ENCODE measurements at regions of chr17 and their contacts with region 1.

Region 1: GRCh38 chr17:78250891-78251794 is 19.7 kb downstream of the TMEM235 start:
- DNase-seq: peak; percentile 70 to 88 (median 82)
- ATAC-seq: peak; percentile 73
- H3K4me3 ChIP-seq: peak overlapping the region; percentile 73
- H3K4me3 Mint-ChIP-seq: peak overlapping the region; percentile 82 to 96 (median 92)
- H3K27ac ChIP-seq: peak overlapping the region; percentile 87
- H3K27ac Mint-ChIP-seq: peak overlapping the region; percentile 91 to 100 (median 98)
- H3K4me1 ChIP-seq: peaks cover 37 to 48% of the 10 kb centered on the region in 2 donors
- H3K4me1 Mint-ChIP-seq: peaks cover 24 to 57% (median 47%) of the 10 kb centered on the region in 7 donors
- H3K27me3 ChIP-seq: no peaks in the 10 kb centered on the region
- H3K27me3 Mint-ChIP-seq: peaks cover 0 to 4% (median 0%) of the 10 kb centered on the region in 5 donors

Region 2: DNA sequence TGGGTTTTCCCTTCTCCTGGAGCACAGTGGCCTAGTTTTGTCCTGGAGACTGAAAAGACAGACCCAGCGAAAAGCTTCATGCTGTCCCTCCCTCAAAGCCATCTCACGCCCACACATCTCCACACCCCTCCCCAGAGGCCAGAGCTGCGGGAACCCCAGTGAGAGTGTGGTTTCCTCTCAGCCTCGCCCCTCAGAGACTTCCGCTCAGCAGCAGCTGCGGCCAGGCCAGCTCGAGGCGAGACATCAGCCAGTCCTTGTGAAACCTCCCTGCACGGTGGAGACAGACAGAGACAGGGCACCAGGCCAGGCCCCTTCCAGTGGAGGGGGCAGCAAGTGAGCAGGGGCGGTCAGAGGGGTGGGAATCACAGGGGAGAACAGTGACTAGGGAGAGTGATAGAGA is 369.6 kb before region 1 on chr17:
- CTCF ChIA-PET with region 1: no interaction called
- POLR2A ChIA-PET with region 1: no interaction called
- intact Hi-C with region 1: loop called in 1 of 2 experiments (anchors 10 kb)
- DNase-seq: peak; percentile 35 to 78 (median 45)
- ATAC-seq: peak; percentile 70
- H3K4me3 ChIP-seq: peak overlapping the region; percentile 61
- H3K4me3 Mint-ChIP-seq: peak overlapping the region; percentile 71 to 94 (median 81)
- H3K27ac ChIP-seq: peak overlapping the region; percentile 93
- H3K27ac Mint-ChIP-seq: peak overlapping the region; percentile 92 to 99 (median 98)
- H3K4me1 ChIP-seq: peaks cover 62 to 79% of the 10 kb centered on the region in 2 donors
- H3K4me1 Mint-ChIP-seq: peaks cover 58 to 98% (median 89%) of the 10 kb centered on the region in 7 donors
- H3K27me3 ChIP-seq: no peaks in the 10 kb centered on the region
- H3K27me3 Mint-ChIP-seq: peaks cover 0 to 17% (median 0%) of the 10 kb centered on the region in 5 donors

Region 3: DNA sequence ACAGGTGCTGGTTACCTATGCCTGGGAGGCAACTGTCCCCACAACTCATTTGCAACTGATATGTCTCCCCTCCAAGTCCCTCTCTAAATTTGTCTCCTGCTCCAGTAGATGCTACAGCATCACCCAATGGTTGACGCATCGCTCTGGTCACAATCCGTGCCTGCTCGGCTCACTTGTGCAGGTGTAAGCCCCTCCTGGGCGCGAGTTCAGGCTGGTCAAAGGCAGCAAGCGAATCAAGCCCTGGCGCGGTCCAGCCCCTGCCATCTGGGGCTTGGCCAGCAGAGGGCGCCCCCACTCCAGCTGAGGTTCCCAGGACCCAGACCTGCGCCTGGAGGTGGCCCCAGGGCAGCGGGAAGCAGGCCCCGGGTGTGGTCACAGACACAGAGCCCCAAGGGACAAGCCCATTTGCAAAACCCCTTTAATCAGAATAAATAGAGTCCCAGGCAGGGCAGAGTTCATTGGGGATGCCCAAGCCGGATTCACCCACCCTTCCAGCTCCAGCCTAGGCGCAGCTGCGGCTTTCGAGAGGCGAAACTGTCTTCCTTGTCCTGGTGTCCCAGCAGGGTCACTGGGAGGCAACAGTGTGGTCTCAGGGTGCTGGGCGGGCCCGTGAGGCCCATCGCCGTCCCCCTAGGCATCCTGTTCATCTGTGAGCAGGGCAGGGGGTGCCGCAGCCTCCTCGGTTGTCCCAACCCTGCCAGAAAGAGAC is 138.5 kb before region 1 on chr17:
- CTCF ChIA-PET with region 1: interaction called, 5 read pairs
- POLR2A ChIA-PET with region 1: interaction called, 8 read pairs
- intact Hi-C with region 1: loop called (anchors 1 to 5 kb)
- DNase-seq: peak; percentile 57 to 89 (median 73)
- ATAC-seq: peak; percentile 85
- H3K4me3 ChIP-seq: no peak overlapping the region
- H3K4me3 Mint-ChIP-seq: peak overlapping the region in 7 of 10 donors; percentile 11 to 71 (median 61)
- H3K27ac ChIP-seq: peak overlapping the region; percentile 43
- H3K27ac Mint-ChIP-seq: peak overlapping the region; percentile 65 to 95 (median 84)
- H3K4me1 ChIP-seq: peaks cover 21 to 36% of the 10 kb centered on the region in 2 donors
- H3K4me1 Mint-ChIP-seq: peaks cover 35 to 64% (median 47%) of the 10 kb centered on the region in 7 donors
- H3K27me3 ChIP-seq: no peaks in the 10 kb centered on the region
- H3K27me3 Mint-ChIP-seq: no peaks in the 10 kb centered on the region

Region 4: GRCh38 chr17:78151514-78152008 is 99.6 kb before region 1 on chr17:
- CTCF ChIA-PET with region 1: no interaction called
- POLR2A ChIA-PET with region 1: no interaction called
- intact Hi-C with region 1: no loop called
- DNase-seq: no peak
- ATAC-seq: no peak
- H3K4me3 ChIP-seq: no peak overlapping the region
- H3K4me3 Mint-ChIP-seq: no peak overlapping the region
- H3K27ac ChIP-seq: no peak overlapping the region
- H3K27ac Mint-ChIP-seq: no peak overlapping the region
- H3K4me1 ChIP-seq: peaks cover 0 to 4% of the 10 kb centered on the region in 2 donors
- H3K4me1 Mint-ChIP-seq: peaks cover 7 to 19% (median 14%) of the 10 kb centered on the region in 7 donors
- H3K27me3 ChIP-seq: no peaks in the 10 kb centered on the region
- H3K27me3 Mint-ChIP-seq: peaks cover 0 to 4% (median 0%) of the 10 kb centered on the region in 5 donors

Region 5: DNA sequence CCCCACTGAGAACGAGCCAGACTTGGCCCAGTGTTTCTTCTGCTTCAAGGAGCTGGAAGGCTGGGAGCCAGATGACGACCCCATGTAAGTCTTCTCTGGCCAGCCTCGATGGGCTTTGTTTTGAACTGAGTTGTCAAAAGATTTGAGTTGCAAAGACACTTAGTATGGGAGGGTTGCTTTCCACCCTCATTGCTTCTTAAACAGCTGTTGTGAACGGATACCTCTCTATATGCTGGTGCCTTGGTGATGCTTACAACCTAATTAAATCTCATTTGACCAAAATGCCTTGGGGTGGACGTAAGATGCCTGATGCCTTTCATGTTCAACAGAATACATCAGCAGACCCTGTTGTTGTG is 36.5 kb before region 1 on chr17:
- CTCF ChIA-PET with region 1: interaction called, 3 read pairs
- POLR2A ChIA-PET with region 1: interaction called, 3 read pairs
- intact Hi-C with region 1: loop called (anchors 1 to 2 kb)
- DNase-seq: no peak
- ATAC-seq: no peak
- H3K4me3 ChIP-seq: no peak overlapping the region
- H3K4me3 Mint-ChIP-seq: peak overlapping the region in 9 of 10 donors; percentile 44 to 97 (median 68)
- H3K27ac ChIP-seq: no peak overlapping the region
- H3K27ac Mint-ChIP-seq: peak overlapping the region in 1 of 9 donors; percentile 87
- H3K4me1 ChIP-seq: peaks cover 5 to 6% of the 10 kb centered on the region in 2 donors
- H3K4me1 Mint-ChIP-seq: peaks cover 0 to 25% (median 4%) of the 10 kb centered on the region in 7 donors
- H3K27me3 ChIP-seq: no peaks in the 10 kb centered on the region
- H3K27me3 Mint-ChIP-seq: no peaks in the 10 kb centered on the region

Region 6: DNA sequence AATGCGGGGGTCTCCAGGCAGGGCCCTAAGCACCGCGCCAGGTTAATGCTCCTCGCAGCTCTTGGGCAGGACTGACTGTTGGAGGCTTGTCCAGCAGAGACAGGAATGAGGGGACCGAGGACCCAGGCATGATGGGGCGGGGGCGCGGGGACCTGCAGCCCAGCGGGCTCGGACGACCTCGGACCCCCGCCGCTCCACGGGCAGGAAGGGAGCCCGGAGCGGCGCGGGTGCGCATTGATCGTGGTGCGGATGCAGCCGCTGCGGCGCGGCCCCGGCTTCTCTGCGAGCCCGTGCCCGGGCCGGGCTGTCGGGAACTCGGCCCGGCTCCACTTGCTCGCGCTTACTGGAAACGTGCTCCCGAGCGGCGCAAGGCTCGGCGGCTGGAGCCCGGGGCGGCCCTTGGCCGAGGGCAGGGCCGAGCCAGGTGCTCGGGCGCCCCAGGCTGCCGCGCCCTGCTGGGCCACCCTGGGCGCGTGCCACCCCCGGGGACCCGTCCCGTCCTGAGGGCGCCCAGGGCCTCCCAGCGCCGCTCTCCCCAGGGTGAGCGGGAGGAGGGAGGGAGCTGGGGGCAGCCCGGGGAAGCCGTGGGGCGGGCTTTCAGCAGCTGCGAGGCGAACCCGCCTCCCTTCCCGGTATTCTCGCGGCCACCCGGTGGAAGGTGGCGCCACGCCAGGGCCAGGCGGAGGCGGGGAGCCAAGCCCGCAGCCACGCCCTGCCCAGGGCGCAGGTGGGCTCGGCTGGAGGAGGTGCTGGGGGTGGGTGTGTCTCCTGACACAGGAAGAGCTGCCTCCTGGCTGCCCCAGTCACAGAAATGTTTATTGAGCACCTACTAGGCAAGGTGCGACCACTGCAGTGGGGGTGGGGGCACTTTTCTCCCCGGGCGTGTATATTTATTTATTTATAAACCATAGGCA is 62.8 kb after region 1 on chr17:
- CTCF ChIA-PET with region 1: interaction called, 3 read pairs
- POLR2A ChIA-PET with region 1: interaction called, 3 read pairs
- intact Hi-C with region 1: loop called in 1 of 2 experiments (anchors 2 kb)
- DNase-seq: peak; percentile 47 to 78 (median 70)
- ATAC-seq: peak; percentile 79
- H3K4me3 ChIP-seq: peak overlapping the region; percentile 56
- H3K4me3 Mint-ChIP-seq: peak overlapping the region; percentile 68 to 89 (median 79)
- H3K27ac ChIP-seq: peak overlapping the region; percentile 59
- H3K27ac Mint-ChIP-seq: peak overlapping the region; percentile 77 to 94 (median 88)
- H3K4me1 ChIP-seq: peaks cover 22 to 36% of the 10 kb centered on the region in 2 donors
- H3K4me1 Mint-ChIP-seq: peaks cover 42 to 63% (median 56%) of the 10 kb centered on the region in 7 donors
- H3K27me3 ChIP-seq: no peaks in the 10 kb centered on the region
- H3K27me3 Mint-ChIP-seq: peaks cover 0 to 24% (median 0%) of the 10 kb centered on the region in 5 donors

Region 7: DNA sequence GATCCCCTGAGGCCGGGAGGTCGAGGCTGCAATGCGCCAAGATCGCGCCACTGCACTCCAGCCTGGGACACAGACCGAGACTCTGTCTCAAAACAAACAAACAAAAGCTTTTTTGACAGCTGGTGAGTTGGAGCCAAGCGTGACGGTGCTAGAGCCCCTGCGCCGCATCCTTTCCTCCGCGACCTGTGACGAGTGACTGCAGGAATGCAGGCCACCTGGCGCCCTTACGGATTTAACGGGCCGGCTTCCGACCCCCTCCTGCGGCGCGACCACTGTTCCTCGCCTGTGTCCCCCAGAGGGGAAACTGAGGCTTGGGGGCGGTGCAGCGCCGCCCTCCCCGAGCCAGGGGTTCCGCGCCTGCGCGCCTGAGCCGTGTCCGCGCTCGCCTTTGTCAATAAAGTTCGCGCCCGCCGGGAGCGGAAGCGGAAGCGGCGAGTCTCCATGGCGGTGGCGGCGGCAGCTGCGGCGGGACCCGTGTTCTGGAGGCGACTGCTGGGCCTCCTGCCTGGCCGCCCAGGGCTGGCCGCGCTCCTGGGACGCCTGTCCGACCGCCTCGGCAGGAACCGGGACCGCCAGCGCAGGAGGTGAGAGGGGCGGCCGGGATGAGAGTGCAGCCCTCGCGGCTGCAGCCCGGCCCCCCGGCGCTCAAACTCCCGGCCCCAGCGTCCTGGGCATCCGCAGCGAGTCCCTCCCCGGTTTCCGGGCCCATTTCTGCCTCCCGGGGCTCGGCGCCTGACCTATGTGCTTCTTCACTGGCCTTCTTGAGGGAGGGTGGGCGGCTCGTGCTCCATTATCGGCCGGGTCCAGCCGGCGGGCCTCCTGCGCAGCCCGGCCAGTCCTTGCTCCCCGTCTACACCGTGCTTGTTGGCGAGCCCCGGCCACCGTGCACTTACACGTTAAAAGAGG is 127.3 kb after region 1 on chr17 and contains the start of gene PGS1:
- CTCF ChIA-PET with region 1: no interaction called
- POLR2A ChIA-PET with region 1: interaction called, 7 read pairs
- intact Hi-C with region 1: loop called in 1 of 2 experiments (anchors 1 kb)
- DNase-seq: peak; percentile 76 to 91 (median 87)
- ATAC-seq: peak; percentile 70
- H3K4me3 ChIP-seq: peak within 1 kb of the TSS; percentile 82
- H3K4me3 Mint-ChIP-seq: peak within 1 kb of the TSS; percentile 65 to 96 (median 93)
- H3K27ac ChIP-seq: peak within 1 kb of the TSS; percentile 73
- H3K27ac Mint-ChIP-seq: peak within 1 kb of the TSS; percentile 87 to 93 (median 91)
- H3K4me1 ChIP-seq: peaks cover 35 to 44% of the 10 kb centered on the region in 2 donors
- H3K4me1 Mint-ChIP-seq: peaks cover 38 to 51% (median 42%) of the 10 kb centered on the region in 7 donors
- H3K27me3 ChIP-seq: no peaks in the 10 kb centered on the region
- H3K27me3 Mint-ChIP-seq: no peaks in the 10 kb centered on the region
- total RNA-seq, gene PGS1: 66.6 to 84.3 (median 82.0) TPM

Region 8: GRCh38 chr17:78840725-78841611 is 589.8 kb after region 1 on chr17 and contains the start of gene USP36:
- CTCF ChIA-PET with region 1: no interaction called
- POLR2A ChIA-PET with region 1: no interaction called
- intact Hi-C with region 1: loop called (anchors 1 to 10 kb)
- DNase-seq: peak; percentile 98 to 100 (median 99)
- ATAC-seq: peak; percentile 91
- H3K4me3 ChIP-seq: peak within 1 kb of the TSS; percentile 80
- H3K4me3 Mint-ChIP-seq: peak within 1 kb of the TSS; percentile 90 to 97 (median 95)
- H3K27ac ChIP-seq: peak within 1 kb of the TSS; percentile 99
- H3K27ac Mint-ChIP-seq: peak within 1 kb of the TSS; percentile 90 to 100 (median 98)
- H3K4me1 ChIP-seq: peaks cover 18 to 31% of the 10 kb centered on the region in 2 donors
- H3K4me1 Mint-ChIP-seq: peaks cover 38 to 60% (median 49%) of the 10 kb centered on the region in 7 donors
- H3K27me3 ChIP-seq: no peaks in the 10 kb centered on the region
- H3K27me3 Mint-ChIP-seq: no peaks in the 10 kb centered on the region
- total RNA-seq, gene USP36: 107 to 414 (median 154) TPM